ENCODE measurements at regions of chr15 and their contacts with region 1.

Region 1: GRCh38 chr15:34101366-34102175 is at the starts of genes EMC7 and PGBD4:
- DNase-seq: peak; percentile 100
- H3K4me3 ChIP-seq: peak within 1 kb of the TSS; percentile 72 to 95 (median 85)
- H3K27ac ChIP-seq: peak within 1 kb of the TSS; percentile 83 to 88 (median 86)
- H3K4me1 ChIP-seq: peaks cover 21 to 38% (median 32%) of the 10 kb centered on the region in 4 donors
- H3K27me3 ChIP-seq: no peaks in the 10 kb centered on the region
- CTCF ChIP-seq: peak in 1 of 3 experiments; percentile 36
- EP300 ChIP-seq: no peak
- POLR2A ChIP-seq: peak; percentile 9
- total RNA-seq, gene EMC7: 38.6 to 47.1 (median 42.4) TPM
- total RNA-seq, gene PGBD4: 0.66 to 1.7 (median 1.2) TPM

Region 2: GRCh38 chr15:34209421-34210282 is 108.1 kb after region 1 on chr15 and contains the start of gene KATNBL1:
- intact Hi-C with region 1: loop called (anchors 5 kb)
- DNase-seq: peak; percentile 98
- H3K4me3 ChIP-seq: peak within 1 kb of the TSS; percentile 67 to 78 (median 68)
- H3K27ac ChIP-seq: peak within 1 kb of the TSS; percentile 83 to 90 (median 86)
- H3K4me1 ChIP-seq: peaks cover 15 to 22% (median 20%) of the 10 kb centered on the region in 4 donors
- H3K27me3 ChIP-seq: no peaks in the 10 kb centered on the region
- CTCF ChIP-seq: peak; percentile 92 to 98 (median 96)
- EP300 ChIP-seq: no peak
- POLR2A ChIP-seq: no peak
- total RNA-seq, gene KATNBL1: 29.9 to 61.9 (median 32.8) TPM

Region 3: DNA sequence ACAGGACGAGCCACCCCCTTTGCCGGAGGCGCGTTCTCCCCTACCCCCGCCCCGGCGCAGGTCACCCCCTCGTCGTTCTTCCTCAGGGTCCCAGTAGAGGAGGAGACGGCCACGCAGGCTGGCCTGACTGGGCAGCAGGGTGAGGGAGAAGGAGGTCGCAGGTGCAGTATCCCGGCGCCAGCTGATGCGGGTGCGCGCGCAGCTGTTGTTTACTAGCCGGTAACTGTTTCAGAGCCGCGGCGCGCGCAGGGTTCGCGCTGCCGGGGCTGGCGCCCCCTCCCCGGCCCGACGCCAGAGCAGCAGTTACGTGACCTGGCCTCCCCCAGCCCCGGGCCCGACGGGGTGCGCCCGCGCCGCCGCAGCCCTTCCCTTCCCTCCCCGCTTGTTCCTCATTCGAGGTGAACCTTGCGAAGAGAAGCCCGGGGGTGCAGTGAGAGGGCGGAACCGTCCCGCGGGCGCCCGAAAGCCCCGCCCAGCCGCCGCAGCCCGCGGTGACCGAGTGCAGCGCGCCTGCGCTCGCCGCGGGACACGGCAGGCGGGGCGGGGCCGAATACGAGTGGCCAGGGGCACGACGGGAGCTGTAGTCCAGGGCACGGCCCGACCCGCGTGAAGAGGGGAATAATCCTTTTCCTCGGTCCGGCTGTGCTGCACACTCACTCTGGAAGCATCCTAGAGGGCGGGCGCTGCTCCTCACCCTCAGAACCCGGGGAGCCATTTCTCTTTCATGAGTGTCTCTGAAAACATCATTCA is 236.2 kb after region 1 on chr15 and contains the start of gene SLC12A6:
- intact Hi-C with region 1: loop called (anchors 10 kb)
- DNase-seq: peak; percentile 94
- H3K4me3 ChIP-seq: peak within 1 kb of the TSS; percentile 78 to 97 (median 88)
- H3K27ac ChIP-seq: peak within 1 kb of the TSS; percentile 82 to 90 (median 88)
- H3K4me1 ChIP-seq: peaks cover 36 to 61% (median 50%) of the 10 kb centered on the region in 4 donors
- H3K27me3 ChIP-seq: no peaks in the 10 kb centered on the region
- CTCF ChIP-seq: peak in 1 of 3 experiments; percentile 16
- EP300 ChIP-seq: no peak
- POLR2A ChIP-seq: peak; percentile 44
- total RNA-seq, gene SLC12A6: 16.1 to 21.4 (median 16.3) TPM

Region 4: GRCh38 chr15:34367101-34368081 is 265.8 kb after region 1 on chr15 and contains the start of gene LPCAT4:
- intact Hi-C with region 1: loop called (anchors 5 kb)
- DNase-seq: peak; percentile 94
- H3K4me3 ChIP-seq: peak within 1 kb of the TSS; percentile 89 to 98 (median 92)
- H3K27ac ChIP-seq: peak within 1 kb of the TSS; percentile 96 to 98 (median 98)
- H3K4me1 ChIP-seq: peaks cover 16 to 31% (median 26%) of the 10 kb centered on the region in 4 donors
- H3K27me3 ChIP-seq: no peaks in the 10 kb centered on the region
- CTCF ChIP-seq: peak; percentile 92 to 97 (median 97)
- EP300 ChIP-seq: no peak
- POLR2A ChIP-seq: no peak
- total RNA-seq, gene LPCAT4: 7.5 to 14.9 (median 11.5) TPM